IMR-90 (cell line): ENCODE measurements at regions of chr2 and their contacts with region 1.

Region 1: GRCh38 chr2:108988796-108989713 is at the start of gene EDAR:
- DNase-seq: no peak
- ATAC-seq: no peak; the same call in 1 of the 2 replicates
- H3K4me3 ChIP-seq: no peak within 1 kb of the TSS
- H3K27ac ChIP-seq: no peak within 1 kb of the TSS
- H3K4me1 ChIP-seq: no peaks in the 10 kb centered on the region
- H3K27me3 ChIP-seq: peaks cover 76% of the 10 kb centered on the region
- CTCF ChIP-seq: peak; percentile 24; the same call in 1 of the 2 replicates
- POLR2A ChIP-seq: no peak
- RAD21 ChIP-seq: 0 out of 2 replicates have a peak, but pooled peaks have one; percentile 12
- total RNA-seq, gene EDAR: not detected in 2 replicates

Region 2: DNA sequence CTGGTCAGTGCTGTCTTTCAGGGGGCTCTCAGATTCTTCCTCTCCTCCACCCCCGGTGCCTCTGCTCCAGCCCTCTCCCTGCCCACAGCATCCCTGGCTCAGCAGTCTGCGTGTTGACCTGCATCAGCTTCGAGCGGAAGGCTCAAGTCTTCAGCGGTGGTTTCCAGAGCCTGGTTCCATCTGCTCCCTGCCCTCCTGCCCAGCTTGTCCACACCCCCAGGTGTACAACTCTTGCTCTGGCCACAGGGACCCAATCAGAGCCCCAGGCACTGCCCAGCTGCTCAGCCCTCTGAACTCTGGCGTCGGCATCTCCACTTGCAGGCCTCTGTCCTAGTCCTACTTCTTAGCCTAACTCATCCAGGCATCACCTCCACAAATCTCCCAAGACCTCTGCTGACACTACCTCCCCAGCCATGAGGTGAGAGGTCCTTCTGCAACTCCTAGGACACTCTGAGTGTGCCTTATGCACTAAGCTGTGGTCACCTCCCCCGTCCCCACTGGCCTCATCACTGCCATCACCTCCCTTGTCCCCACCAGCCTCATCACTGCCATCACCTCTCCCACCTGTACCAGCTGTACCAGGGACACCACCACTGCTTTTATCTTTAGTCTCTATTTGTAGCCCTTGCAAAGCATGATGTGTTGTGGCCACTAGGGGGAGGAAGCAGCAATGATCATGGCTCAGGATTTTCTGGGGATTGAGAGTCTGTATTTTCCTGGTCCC is 61.0 kb before region 1 on chr2:
- CTCF ChIA-PET with region 1: interaction called, 3 read pairs
- POLR2A ChIA-PET with region 1: interaction called, 4 read pairs
- dilution Hi-C with region 1: no loop called
- in situ Hi-C with region 1: no loop called
- intact Hi-C with region 1: loop called (anchors 10 kb)
- DNase-seq: peak; percentile 64
- ATAC-seq: peak; percentile 95
- H3K4me3 ChIP-seq: no peak overlapping the region
- H3K27ac ChIP-seq: no peak overlapping the region
- H3K4me1 ChIP-seq: no peaks in the 10 kb centered on the region
- H3K27me3 ChIP-seq: peaks cover 82% of the 10 kb centered on the region
- CTCF ChIP-seq: peak; percentile 80
- POLR2A ChIP-seq: no peak
- RAD21 ChIP-seq: peak; percentile 75